ENCODE measurements at regions of chr7 and their contacts with region 1.

Region 1: GRCh38 chr7:101688183-101688831 is 59.2 kb upstream of the MYL10 start:
- DNase-seq: peak; percentile 36 to 95 (median 80)

Region 2: GRCh38 chr7:101507791-101508252 is 180.5 kb before region 1 on chr7:
- intact Hi-C with region 1: no loop called
- DNase-seq: peak in 2 of 10 donors; percentile 25 to 42

Region 3: DNA sequence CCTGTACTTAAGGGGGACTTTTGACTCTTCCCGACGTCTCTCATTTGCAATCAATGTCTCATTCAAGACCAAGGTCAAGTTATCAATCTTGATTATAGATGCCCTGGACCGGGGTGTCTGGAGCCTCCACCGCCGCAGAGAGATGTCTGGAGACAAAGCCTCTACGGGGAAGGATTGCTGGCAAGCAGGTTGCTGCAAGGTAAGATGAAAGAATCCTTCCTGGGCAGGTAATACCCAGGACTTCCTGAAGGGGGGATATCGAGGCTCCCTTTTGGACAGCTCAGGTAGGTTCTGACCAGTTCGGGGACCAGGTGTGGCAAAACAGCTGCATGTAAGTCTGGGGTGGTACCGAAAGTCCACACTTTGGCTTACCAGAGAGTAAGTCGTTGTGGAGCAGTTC is 116.7 kb after region 1 on chr7:
- intact Hi-C with region 1: no loop called
- DNase-seq: peak in 1 of 10 donors; percentile 22

Region 4: GRCh38 chr7:101815835-101816493 is 127.7 kb after region 1 on chr7:
- intact Hi-C with region 1: loop called (anchors 2 kb)
- DNase-seq: peak; percentile 42 to 93 (median 54)

Region 5: GRCh38 chr7:102236592-102237287 is 548.4 kb after region 1 on chr7:
- intact Hi-C with region 1: loop called (anchors 1 kb)
- DNase-seq: peak; percentile 37 to 95 (median 68)

Region 6: GRCh38 chr7:102272075-102272917 is 584.0 kb after region 1 on chr7:
- intact Hi-C with region 1: loop called (anchors 1 kb)
- DNase-seq: peak; percentile 55 to 97 (median 87)